ENCODE measurements at regions of chr17 and their contacts with region 1.

Region 1: DNA sequence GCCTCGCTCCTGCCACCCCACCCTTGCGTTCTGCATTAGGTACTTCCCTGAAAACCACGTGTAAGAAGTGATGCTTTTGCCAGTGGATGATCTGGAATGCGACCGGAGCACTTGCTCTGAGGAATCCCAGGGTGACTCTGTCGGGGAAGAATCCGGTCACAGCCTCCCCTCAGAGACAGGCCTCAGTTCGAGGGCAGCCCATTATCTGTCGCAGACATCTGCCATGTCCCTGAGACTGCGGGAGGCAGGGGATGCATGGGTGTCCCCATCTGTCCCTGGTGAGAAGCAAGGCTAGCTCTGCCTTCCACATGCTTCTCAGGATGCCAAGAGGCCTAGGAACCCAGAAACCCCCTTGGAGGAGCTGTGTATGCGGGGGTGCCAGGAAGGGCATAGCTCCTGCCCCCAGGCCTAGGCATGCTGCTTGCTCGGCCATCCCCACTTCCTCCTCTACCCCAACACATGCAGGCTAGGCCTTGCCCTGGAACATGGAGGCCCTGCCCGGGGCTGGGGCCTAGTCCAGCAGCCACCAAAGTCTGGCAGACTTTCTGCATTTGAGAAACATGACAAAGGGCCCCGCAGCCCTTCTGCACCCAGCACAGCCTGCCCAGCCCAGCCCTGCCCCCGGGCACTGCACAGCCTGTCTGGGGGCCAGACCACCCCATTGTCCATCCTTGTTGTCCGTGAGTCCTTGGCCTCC is 20.5 kb downstream of the MNT start:
- DNase-seq: no peak
- ATAC-seq: no peak
- H3K4me3 Mint-ChIP-seq: no peak overlapping the region
- H3K27ac Mint-ChIP-seq: no peak overlapping the region
- H3K4me1 Mint-ChIP-seq: peaks cover 3% of the 10 kb centered on the region
- H3K27me3 Mint-ChIP-seq: no peaks in the 10 kb centered on the region

Region 2: DNA sequence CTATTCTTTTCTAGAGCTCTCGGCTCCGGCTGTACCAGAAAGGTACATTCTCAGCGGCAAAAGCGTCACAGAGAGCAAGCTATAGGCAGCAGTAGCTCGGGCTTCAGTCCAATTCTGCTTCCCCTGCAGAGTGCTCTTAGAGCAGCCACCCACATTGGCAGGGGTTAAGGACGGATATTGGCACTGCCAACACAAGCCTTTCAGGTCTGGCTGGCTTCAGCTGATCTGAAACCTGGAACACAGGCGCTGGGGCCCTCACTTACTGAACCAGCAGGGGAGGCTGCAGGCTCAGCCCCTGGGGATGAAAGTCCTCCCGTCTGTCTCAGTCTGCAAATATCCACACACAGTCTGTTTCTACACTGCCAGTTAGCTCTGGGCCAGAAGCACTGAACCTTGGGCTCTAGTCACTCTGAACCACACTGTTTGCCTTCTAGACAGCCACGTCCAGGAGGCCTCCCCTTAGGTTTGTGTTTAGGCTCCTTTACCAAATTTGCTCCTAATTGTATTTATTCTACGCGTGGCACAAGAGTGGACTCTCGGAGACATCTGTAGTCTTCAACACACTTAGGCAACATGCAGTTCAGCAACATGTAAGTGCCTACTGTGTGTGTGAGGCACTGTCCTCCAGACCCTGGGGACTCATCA is 285.4 kb before region 1 on chr17:
- CTCF ChIA-PET with region 1: no interaction called
- POLR2A ChIA-PET with region 1: no interaction called
- intact Hi-C with region 1: no loop called
- DNase-seq: no peak
- ATAC-seq: no peak
- H3K4me3 Mint-ChIP-seq: no peak overlapping the region
- H3K27ac Mint-ChIP-seq: no peak overlapping the region
- H3K4me1 Mint-ChIP-seq: peaks cover 19% of the 10 kb centered on the region
- H3K27me3 Mint-ChIP-seq: no peaks in the 10 kb centered on the region

Region 3: DNA sequence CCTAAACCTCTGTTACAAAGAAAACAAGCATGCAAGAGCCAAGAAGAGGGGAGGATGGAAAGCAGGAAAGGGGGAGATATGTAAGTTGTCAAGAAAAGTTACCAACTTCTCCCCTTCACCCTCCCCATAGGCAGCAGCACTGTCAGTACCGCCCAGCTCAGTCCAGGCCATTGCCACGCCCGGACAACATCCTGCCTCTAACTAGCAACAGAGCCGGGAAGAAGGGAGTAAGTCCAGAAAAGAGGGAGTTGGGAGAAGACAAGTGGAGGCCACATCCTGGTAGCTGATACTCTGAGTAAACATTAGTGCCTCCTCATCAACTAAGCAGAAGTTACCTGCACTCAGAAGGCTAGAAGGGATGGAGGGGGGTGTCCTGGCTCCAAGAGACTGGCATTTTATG is 190.4 kb before region 1 on chr17:
- CTCF ChIA-PET with region 1: no interaction called
- POLR2A ChIA-PET with region 1: no interaction called
- intact Hi-C with region 1: no loop called
- DNase-seq: no peak
- ATAC-seq: no peak
- H3K4me3 Mint-ChIP-seq: no peak overlapping the region
- H3K27ac Mint-ChIP-seq: no peak overlapping the region
- H3K4me1 Mint-ChIP-seq: peaks cover 30% of the 10 kb centered on the region
- H3K27me3 Mint-ChIP-seq: no peaks in the 10 kb centered on the region

Region 4: GRCh38 chr17:2282297-2282873 is 98.0 kb before region 1 on chr17:
- CTCF ChIA-PET with region 1: no interaction called
- POLR2A ChIA-PET with region 1: no interaction called
- intact Hi-C with region 1: no loop called
- DNase-seq: no peak
- ATAC-seq: peak; percentile 80
- H3K4me3 Mint-ChIP-seq: no peak overlapping the region
- H3K27ac Mint-ChIP-seq: peak overlapping the region; percentile 58
- H3K4me1 Mint-ChIP-seq: peaks cover 31% of the 10 kb centered on the region
- H3K27me3 Mint-ChIP-seq: no peaks in the 10 kb centered on the region

Region 5: GRCh38 chr17:2347547-2348307 is 32.6 kb before region 1 on chr17:
- CTCF ChIA-PET with region 1: interaction called, 17 read pairs
- POLR2A ChIA-PET with region 1: no interaction called
- intact Hi-C with region 1: no loop called
- DNase-seq: no peak
- ATAC-seq: no peak
- H3K4me3 Mint-ChIP-seq: no peak overlapping the region
- H3K27ac Mint-ChIP-seq: no peak overlapping the region
- H3K4me1 Mint-ChIP-seq: peaks cover 6% of the 10 kb centered on the region
- H3K27me3 Mint-ChIP-seq: no peaks in the 10 kb centered on the region

Region 6: DNA sequence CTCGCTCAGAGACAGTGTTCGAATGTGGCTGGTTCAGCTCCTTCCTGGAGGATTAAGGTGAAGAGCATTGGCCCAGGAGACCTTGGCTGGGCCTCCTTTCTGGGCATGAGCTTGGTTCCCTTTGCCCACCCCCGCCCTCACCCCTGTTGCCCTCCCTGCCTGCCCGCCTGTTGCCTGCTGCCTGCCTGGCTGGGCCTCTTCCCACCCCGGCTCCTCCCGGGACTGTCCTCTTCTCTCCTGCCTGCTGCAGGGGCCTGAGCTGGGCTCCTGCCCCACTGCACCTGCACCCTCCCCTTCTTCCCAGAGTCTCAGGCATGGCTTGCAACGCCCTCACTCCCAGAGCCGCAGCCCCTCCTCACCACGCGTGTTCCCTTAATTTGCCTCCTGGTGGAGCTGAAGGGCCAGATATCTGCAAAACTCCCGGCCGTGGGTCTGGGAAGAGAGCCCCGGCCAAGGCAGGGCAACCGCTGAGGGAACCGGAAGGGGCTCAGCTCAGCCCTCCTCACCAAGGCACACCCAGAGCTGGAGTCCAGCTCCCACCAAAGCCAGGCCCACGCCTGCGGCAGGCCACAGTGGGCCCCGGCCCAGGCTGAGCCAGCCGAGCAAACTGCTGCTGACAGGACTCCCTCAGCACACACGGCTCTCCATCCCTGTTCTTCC is 10.7 kb before region 1 on chr17:
- CTCF ChIA-PET with region 1: interaction called, 31 read pairs
- POLR2A ChIA-PET with region 1: no interaction called
- intact Hi-C with region 1: no loop called
- DNase-seq: no peak
- ATAC-seq: no peak
- H3K4me3 Mint-ChIP-seq: no peak overlapping the region
- H3K27ac Mint-ChIP-seq: no peak overlapping the region
- H3K4me1 Mint-ChIP-seq: no peaks in the 10 kb centered on the region
- H3K27me3 Mint-ChIP-seq: no peaks in the 10 kb centered on the region

Region 7: DNA sequence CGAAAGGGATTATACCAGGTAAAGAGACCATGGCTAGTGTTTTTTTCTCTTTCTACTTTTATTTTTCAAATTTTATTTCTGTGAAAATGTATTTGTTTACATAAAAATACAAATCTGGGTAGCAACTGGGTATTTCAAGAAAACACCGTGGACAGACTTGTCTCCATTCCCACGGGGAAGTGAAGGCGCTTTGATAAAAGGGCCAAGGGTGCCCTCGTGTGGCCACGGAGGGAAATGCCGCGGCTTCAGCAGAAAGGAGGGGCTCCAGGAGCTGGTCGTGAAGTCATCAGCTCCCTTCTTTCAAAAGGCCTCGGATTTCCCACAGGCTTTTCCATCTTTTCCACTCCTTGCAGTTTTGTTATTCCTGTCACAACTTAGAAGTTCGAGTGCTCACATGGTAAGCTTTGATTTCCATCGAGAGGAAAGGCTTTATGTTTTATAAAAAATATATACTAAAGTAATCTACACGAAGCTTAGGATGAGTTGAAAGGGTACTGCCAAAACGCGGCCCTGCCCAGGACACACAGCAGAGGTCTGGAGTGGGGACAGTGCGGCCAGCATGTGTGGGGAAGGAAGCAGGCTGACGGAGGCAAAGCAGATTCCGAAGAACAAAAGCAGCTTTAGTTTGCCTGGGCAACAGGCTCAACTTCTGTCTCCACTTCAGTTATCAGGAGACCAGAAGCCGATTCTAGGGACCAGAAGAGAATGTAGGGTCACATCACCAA is 35.8 kb after region 1 on chr17:
- CTCF ChIA-PET with region 1: interaction called, 389 read pairs
- POLR2A ChIA-PET with region 1: interaction called, 22 read pairs
- intact Hi-C with region 1: loop called (anchors 1 kb)
- DNase-seq: peak; percentile 90
- ATAC-seq: peak; percentile 82
- H3K4me3 Mint-ChIP-seq: no peak overlapping the region
- H3K27ac Mint-ChIP-seq: no peak overlapping the region
- H3K4me1 Mint-ChIP-seq: peaks cover 4% of the 10 kb centered on the region
- H3K27me3 Mint-ChIP-seq: no peaks in the 10 kb centered on the region

Region 8: GRCh38 chr17:2688351-2689342 is 308.3 kb after region 1 on chr17:
- CTCF ChIA-PET with region 1: no interaction called
- POLR2A ChIA-PET with region 1: no interaction called
- intact Hi-C with region 1: no loop called
- DNase-seq: no peak
- ATAC-seq: no peak
- H3K4me3 Mint-ChIP-seq: no peak overlapping the region
- H3K27ac Mint-ChIP-seq: peak overlapping the region; percentile 51
- H3K4me1 Mint-ChIP-seq: peaks cover 10% of the 10 kb centered on the region
- H3K27me3 Mint-ChIP-seq: no peaks in the 10 kb centered on the region

Measured in activated CD4-positive, alpha-beta T cell treated with anti-CD3 and anti-CD28 coated beads for 36 hours (primary cell).